ENCODE measurements at regions of chr2 and their contacts with region 1.

Region 1: DNA sequence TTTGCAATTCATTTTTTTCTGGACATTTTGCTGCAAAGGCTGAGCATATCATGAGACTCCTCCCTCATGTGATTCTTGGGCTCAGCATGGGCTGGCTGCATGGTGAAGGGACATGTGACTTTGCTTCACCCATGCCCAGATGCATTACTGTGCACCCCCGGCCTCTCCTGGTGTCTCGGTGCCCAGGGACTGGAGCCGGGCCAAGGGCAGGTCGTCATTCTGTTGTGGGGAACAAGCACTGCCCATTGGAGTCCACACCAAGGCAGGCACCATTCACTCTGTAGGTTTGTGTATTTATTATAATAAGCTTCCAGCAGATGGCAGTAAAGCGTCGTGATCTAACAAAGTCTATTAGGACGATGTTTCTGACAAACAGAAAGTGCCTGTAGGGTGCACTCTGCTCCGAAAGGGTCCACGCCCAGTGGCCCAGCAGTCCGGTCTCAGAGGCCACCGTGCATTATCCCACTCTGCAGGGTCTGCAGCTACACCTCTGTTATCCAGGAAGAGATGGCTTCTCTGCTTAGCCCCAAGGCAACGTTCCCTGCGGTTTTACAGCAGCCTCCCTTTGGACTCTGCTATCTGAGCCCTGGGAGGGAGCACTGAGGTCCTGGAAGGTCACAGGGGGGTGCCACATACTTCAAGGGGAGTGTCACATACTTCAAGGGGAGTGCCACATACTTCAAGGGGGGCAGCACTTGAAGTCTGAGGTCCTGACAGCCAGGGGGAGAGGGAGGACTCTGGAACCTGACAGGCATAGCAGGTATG is 219.6 kb downstream of the TSN start:
- DNase-seq: peak; percentile 63
- H3K4me3 ChIP-seq: peak overlapping the region in 2 of 3 experiments; percentile 15 to 29
- H3K27ac ChIP-seq: no peak overlapping the region
- H3K4me1 ChIP-seq: peaks cover 4% of the 10 kb centered on the region
- H3K27me3 ChIP-seq: no peaks in the 10 kb centered on the region
- CTCF ChIP-seq: peak; percentile 22 to 55

Region 2: DNA sequence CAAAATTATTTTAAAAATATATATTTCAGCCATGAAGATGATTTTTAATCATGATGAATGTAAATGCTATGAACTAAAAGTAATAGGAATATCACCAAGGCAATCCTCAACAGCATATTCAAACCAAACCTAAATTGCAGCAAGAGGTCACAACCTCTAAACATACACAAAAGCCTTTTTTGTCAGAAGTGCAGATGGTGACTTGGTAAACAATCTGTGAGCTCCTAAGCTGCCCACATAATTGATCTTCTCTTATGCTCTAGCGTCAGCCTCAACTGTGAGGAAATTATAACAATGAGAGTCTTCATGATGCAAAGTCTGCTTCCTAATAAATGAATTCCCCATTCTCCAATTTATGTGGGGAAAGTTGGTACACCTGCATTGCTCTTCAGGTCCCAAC is 106.4 kb before region 1 on chr2:
- CTCF ChIA-PET with region 1: no interaction called
- dilution Hi-C with region 1: no loop called
- in situ Hi-C with region 1: no loop called
- intact Hi-C with region 1: no loop called
- DNase-seq: no peak
- H3K4me3 ChIP-seq: no peak overlapping the region
- H3K27ac ChIP-seq: no peak overlapping the region
- H3K4me1 ChIP-seq: no peaks in the 10 kb centered on the region
- H3K27me3 ChIP-seq: no peaks in the 10 kb centered on the region
- CTCF ChIP-seq: no peak

Region 3: GRCh38 chr2:121897335-121897970 is 77.6 kb before region 1 on chr2:
- CTCF ChIA-PET with region 1: no interaction called
- dilution Hi-C with region 1: no loop called
- in situ Hi-C with region 1: no loop called
- intact Hi-C with region 1: loop called (anchors 1 kb)
- DNase-seq: peak; percentile 17
- H3K4me3 ChIP-seq: no peak overlapping the region
- H3K27ac ChIP-seq: no peak overlapping the region
- H3K4me1 ChIP-seq: no peaks in the 10 kb centered on the region
- H3K27me3 ChIP-seq: peaks cover 6% of the 10 kb centered on the region
- CTCF ChIP-seq: peak; percentile 66 to 75

Region 4: GRCh38 chr2:121944072-121944831 is 30.8 kb before region 1 on chr2:
- CTCF ChIA-PET with region 1: no interaction called
- dilution Hi-C with region 1: no loop called
- in situ Hi-C with region 1: no loop called
- intact Hi-C with region 1: no loop called
- DNase-seq: peak; percentile 88
- H3K4me3 ChIP-seq: no peak overlapping the region
- H3K27ac ChIP-seq: no peak overlapping the region
- H3K4me1 ChIP-seq: peaks cover 10% of the 10 kb centered on the region
- H3K27me3 ChIP-seq: no peaks in the 10 kb centered on the region
- CTCF ChIP-seq: no peak

Region 5: GRCh38 chr2:122009561-122009960 is 34.5 kb after region 1 on chr2:
- CTCF ChIA-PET with region 1: no interaction called
- dilution Hi-C with region 1: no loop called
- in situ Hi-C with region 1: no loop called
- intact Hi-C with region 1: no loop called
- DNase-seq: no peak
- H3K4me3 ChIP-seq: no peak overlapping the region
- H3K27ac ChIP-seq: no peak overlapping the region
- H3K4me1 ChIP-seq: no peaks in the 10 kb centered on the region
- H3K27me3 ChIP-seq: no peaks in the 10 kb centered on the region
- CTCF ChIP-seq: no peak

Region 6: DNA sequence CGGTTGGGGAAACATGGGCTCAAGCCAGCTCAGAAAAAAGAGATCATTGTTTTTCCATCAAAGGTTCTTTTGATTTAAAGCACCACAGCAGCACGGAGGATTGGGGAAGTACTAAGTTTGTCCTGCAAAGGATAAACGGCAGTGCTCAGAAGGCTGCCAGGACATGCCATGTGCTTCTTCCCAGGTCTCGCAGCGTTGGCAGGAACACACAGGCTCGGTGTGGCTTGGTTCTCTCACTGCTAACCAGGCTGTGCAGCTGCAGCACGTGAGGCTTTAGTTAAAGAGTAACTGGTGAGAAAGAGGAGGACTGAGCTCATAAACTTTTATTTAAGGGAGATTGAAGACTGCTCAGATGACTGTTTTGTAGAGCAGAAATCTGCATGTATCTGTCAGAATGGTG is 44.6 kb after region 1 on chr2:
- CTCF ChIA-PET with region 1: no interaction called
- dilution Hi-C with region 1: no loop called
- in situ Hi-C with region 1: no loop called
- intact Hi-C with region 1: no loop called
- DNase-seq: no peak
- H3K4me3 ChIP-seq: no peak overlapping the region
- H3K27ac ChIP-seq: no peak overlapping the region
- H3K4me1 ChIP-seq: no peaks in the 10 kb centered on the region
- H3K27me3 ChIP-seq: peaks cover 2% of the 10 kb centered on the region
- CTCF ChIP-seq: no peak

Region 7: GRCh38 chr2:122136056-122136455 is 161.0 kb after region 1 on chr2:
- CTCF ChIA-PET with region 1: no interaction called
- dilution Hi-C with region 1: no loop called
- in situ Hi-C with region 1: no loop called
- intact Hi-C with region 1: loop called (anchors 2 kb)
- DNase-seq: peak; percentile 9
- H3K4me3 ChIP-seq: no peak overlapping the region
- H3K27ac ChIP-seq: no peak overlapping the region
- H3K4me1 ChIP-seq: no peaks in the 10 kb centered on the region
- H3K27me3 ChIP-seq: no peaks in the 10 kb centered on the region
- CTCF ChIP-seq: peak; percentile 64 to 77

Region 8: DNA sequence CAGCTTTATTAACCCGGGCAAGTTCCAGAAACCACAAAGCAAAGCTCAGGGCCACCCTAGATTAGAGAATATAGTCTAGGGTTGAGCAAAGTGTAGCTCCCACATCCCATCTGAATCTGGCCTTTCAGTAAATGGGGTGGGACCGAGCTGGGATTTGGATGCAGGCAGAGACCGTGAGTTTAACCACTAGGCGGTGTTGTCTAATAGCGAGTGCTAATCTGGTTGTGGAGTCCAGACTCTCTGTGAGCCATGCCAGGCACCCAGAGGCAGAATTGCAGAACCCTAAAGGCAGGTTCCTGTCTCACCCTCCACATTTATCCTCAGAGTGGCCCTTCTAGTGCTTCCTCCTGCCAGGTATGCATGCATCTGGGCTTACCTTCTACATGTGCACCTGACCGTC is 216.3 kb after region 1 on chr2:
- CTCF ChIA-PET with region 1: no interaction called
- dilution Hi-C with region 1: no loop called
- in situ Hi-C with region 1: no loop called
- intact Hi-C with region 1: loop called (anchors 1 kb)
- DNase-seq: peak; percentile 46
- H3K4me3 ChIP-seq: no peak overlapping the region
- H3K27ac ChIP-seq: no peak overlapping the region
- H3K4me1 ChIP-seq: no peaks in the 10 kb centered on the region
- H3K27me3 ChIP-seq: no peaks in the 10 kb centered on the region
- CTCF ChIP-seq: peak; percentile 47 to 63

Region 9: GRCh38 chr2:122433123-122433754 is 458.2 kb after region 1 on chr2:
- CTCF ChIA-PET with region 1: no interaction called
- dilution Hi-C with region 1: no loop called
- in situ Hi-C with region 1: no loop called
- intact Hi-C with region 1: loop called (anchors 5 kb)
- DNase-seq: no peak
- H3K4me3 ChIP-seq: no peak overlapping the region
- H3K27ac ChIP-seq: no peak overlapping the region
- H3K4me1 ChIP-seq: no peaks in the 10 kb centered on the region
- H3K27me3 ChIP-seq: no peaks in the 10 kb centered on the region
- CTCF ChIP-seq: no peak

Region 10: DNA sequence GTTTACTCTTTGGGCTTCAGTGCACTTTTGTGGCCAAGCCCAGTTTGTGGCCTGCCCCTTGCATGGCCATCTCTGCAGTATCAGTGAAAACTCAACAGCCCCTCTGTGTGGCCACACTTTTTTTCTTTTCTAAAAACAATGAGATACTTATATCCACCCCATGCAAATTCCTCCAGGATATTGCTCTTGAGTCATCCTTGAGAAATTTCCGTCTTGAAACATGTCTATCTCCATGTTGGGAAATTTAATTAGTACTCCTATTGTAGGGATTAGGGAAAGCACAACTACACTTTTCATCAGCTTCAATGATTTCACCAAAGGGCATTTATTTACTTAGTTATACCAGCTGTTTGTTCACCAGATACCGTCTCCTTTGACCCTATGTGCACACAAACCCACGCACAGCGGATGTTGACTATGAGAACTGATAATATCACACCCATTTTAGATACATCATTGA is 773.5 kb after region 1 on chr2:
- CTCF ChIA-PET with region 1: no interaction called
- dilution Hi-C with region 1: no loop called
- in situ Hi-C with region 1: no loop called
- intact Hi-C with region 1: loop called (anchors 10 kb)
- DNase-seq: peak; percentile 92
- H3K4me3 ChIP-seq: no peak overlapping the region
- H3K27ac ChIP-seq: peak overlapping the region; percentile 67
- H3K4me1 ChIP-seq: peaks cover 17% of the 10 kb centered on the region
- H3K27me3 ChIP-seq: no peaks in the 10 kb centered on the region
- CTCF ChIP-seq: peak in 1 of 2 donors; percentile 4